ENCODE measurements at regions of chr19 and their contacts with region 1.

Region 1: GRCh38 chr19:45768984-45769782 is at the start of gene SIX5:
- DNase-seq: peak; percentile 99
- ATAC-seq: peak; percentile 62
- total RNA-seq, gene SIX5: 22.0 TPM

Region 2: DNA sequence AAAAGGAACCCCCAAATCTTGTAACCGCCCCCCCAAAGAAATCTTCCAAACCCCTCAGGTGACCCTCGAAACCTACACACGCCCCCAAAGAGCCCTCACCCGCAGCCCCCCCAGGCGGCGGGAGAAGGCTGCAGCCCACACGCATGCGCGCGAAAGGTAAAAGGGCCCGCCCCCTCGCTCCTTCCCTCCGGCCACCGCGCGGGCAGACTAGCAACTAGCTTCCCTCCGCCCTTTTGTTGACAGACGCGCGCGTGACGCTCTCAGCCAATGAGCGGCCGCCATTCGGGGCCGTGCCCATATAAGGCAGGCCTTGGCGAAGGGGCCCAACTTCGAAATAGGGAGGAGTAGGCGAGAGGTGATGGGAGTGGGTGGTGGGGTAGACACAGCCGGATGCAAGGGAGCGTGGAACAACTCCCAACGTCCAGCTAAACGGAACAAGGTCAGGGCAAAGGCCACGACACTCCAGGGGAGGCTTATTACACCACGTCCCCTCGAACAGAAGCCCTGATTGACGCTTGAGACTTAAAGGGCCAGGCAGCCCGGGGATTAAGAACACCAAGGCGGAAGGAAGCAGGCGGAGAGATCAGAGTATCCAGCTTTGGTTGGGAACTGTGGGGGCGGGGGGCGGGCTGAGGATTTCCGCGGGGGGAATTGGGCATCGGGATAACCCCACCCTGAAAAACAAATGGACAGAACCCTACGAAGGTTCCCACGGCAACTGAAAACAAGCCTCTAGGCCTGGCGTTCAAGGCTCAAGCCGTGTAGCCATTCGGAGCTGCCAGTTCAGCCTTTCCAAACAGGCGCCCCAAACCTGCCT is 51.8 kb before region 1 on chr19:
- intact Hi-C with region 1: loop called (anchors 5 kb)
- DNase-seq: peak; percentile 99
- ATAC-seq: peak; percentile 97

Region 3: DNA sequence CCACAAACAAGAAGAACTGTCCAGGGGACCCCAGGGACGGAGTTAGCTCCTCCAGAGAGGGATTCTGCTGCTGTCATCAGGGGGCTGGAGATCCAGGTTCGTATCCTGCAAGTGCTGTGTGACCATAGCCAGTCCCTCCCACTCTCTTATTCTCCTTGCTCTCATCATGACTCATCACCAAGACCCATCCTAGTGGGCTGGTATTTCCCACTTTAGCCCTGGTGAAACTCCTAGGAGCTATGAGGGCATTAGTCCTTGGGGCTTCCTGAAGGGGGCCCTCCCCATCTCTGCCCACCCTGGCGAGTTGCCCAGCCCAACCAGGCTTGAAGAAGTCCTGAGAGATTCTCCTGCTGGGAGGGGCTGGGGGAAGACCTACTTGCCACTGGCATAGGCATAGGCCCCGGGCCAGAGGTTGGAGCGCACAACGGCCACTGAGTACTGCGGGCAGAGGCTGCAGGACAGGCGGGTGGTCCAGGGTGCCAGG is 30.9 kb after region 1 on chr19:
- intact Hi-C with region 1: loop called (anchors 5 kb)
- DNase-seq: no peak
- ATAC-seq: no peak

Measured in Right ventricle myocardium superior (tissue), 1 donor.